Kidney (tissue), 22 donors: ENCODE measurements at regions of chr14 and their contacts with region 1.

Region 1: GRCh38 chr14:22570132-22570949 is 18.7 kb downstream of the DAD1 start:
- DNase-seq: peak in 4 of 5 donors; percentile 82 to 97 (median 90)
- H3K4me3 ChIP-seq: no peak overlapping the region
- H3K27ac ChIP-seq: peak overlapping the region in 1 of 2 donors; percentile 18
- H3K4me1 ChIP-seq: peaks cover 0 to 12% (median 9%) of the 10 kb centered on the region in 3 donors
- H3K27me3 ChIP-seq: no peaks in the 10 kb centered on the region
- CTCF ChIP-seq: peak; percentile 87

Region 2: GRCh38 chr14:22852940-22853767 is 282.8 kb after region 1 on chr14:
- intact Hi-C with region 1: loop called (anchors 10 kb)
- DNase-seq: peak; percentile 92 to 96 (median 95)
- H3K4me3 ChIP-seq: peak overlapping the region; percentile 58 to 73 (median 71)
- H3K27ac ChIP-seq: peak overlapping the region; percentile 47 to 73
- H3K4me1 ChIP-seq: peaks cover 0 to 18% (median 5%) of the 10 kb centered on the region in 3 donors
- H3K27me3 ChIP-seq: no peaks in the 10 kb centered on the region
- CTCF ChIP-seq: peak; percentile 98

Region 3: GRCh38 chr14:23183479-23183878 is 613.1 kb after region 1 on chr14 and contains the start of gene SLC7A8:
- intact Hi-C with region 1: no loop called
- DNase-seq: peak in 4 of 5 donors; percentile 71 to 82 (median 74)
- H3K4me3 ChIP-seq: peak within 1 kb of the TSS; percentile 67 to 93 (median 84)
- H3K27ac ChIP-seq: peak within 1 kb of the TSS; percentile 45 to 70
- H3K4me1 ChIP-seq: peaks cover 0 to 8% (median 3%) of the 10 kb centered on the region in 3 donors
- H3K27me3 ChIP-seq: no peaks in the 10 kb centered on the region
- CTCF ChIP-seq: no peak
- total RNA-seq, gene SLC7A8: 22.9 TPM